Ascending aorta (tissue), 2 donors: ENCODE measurements at regions of chr2 and their contacts with region 1.

Region 1: DNA sequence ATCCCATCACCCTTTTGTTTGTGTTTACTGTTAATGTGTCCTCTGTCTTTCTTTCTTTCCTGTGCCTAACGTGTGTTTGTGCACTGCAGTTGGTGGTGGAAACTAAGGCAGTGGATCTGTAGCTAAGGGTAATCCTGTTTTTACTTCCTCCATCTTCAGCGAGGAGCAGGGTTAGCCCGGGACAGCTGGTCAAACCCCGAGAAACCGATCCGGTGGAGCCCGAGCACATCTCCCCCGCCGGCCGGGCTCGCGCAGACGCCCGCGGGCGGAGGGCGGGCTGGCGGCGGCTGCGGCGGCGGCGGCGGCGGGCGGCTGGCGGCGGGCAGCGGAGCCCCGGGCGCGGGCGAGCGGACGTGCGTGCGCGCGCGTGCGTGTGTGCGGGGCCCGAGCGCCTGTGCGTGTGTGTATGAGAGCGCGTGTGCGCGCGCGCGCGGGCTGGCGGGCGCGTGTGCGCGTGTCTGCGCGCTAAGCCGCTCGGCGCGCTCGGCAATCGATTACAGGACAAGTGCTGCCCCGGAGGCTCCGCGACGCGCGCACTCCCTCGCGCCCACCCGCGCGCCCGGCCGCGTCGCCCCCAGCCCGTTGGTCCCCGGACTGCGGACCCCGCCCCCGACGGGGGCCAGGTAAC is at the start of gene IKZF2:
- DNase-seq: peak; percentile 28 to 91
- H3K4me3 ChIP-seq: peak within 1 kb of the TSS; percentile 79 to 80
- H3K27ac ChIP-seq: peak within 1 kb of the TSS; percentile 90 to 93
- H3K4me1 ChIP-seq: peaks cover 0 to 10% of the 10 kb centered on the region in 2 donors
- H3K27me3 ChIP-seq: no peaks in the 10 kb centered on the region
- CTCF ChIP-seq: no peak
- total RNA-seq, gene IKZF2: 3.9 TPM

Region 2: DNA sequence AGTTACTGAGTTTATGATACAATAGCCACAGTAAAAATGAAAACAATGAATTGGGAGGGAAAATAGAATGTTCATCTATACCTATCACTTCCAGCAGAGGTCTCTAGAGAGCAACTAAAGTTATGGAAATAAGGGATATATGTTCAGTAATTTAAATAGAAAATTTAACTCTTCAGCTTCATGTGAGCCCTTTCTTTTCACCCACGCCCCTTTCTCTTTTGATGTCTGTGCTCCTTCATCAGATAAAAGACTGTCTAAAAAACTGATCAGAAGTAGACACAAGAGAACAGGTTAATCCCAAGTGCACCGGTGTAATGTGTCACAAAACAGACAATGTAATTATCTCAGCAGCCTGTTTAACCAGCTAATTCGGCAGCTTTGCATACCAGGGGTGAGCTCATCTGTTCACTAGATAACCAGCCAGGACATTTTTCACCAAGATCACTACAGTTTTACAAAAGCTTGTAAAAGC is 374.5 kb before region 1 on chr2:
- intact Hi-C with region 1: loop called (anchors 1 kb)
- DNase-seq: no peak
- H3K4me3 ChIP-seq: no peak overlapping the region
- H3K27ac ChIP-seq: no peak overlapping the region
- H3K4me1 ChIP-seq: no peaks in the 10 kb centered on the region
- H3K27me3 ChIP-seq: no peaks in the 10 kb centered on the region
- CTCF ChIP-seq: peak; percentile 26 to 63 (median 47)

Region 3: DNA sequence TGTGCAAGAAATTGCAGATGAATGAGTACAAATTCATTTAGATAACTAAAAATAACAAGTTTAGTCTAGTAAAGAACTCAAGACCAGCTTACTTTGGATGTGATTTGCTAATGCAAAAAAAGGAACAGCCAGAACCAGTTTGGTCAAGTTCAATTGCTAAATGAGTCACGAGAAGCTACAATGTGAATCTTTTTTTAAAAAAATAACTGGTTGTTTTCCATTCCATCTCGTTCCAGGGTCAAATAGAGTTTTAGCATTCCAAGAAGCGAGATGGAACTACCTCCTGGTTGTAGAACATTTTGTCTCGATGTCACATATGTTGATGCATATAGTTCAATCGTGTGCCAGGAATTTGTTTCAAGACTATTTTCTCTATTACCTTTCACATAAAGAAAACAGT is 64.9 kb after region 1 on chr2:
- intact Hi-C with region 1: loop called (anchors 5 kb)
- DNase-seq: no peak
- H3K4me3 ChIP-seq: no peak overlapping the region
- H3K27ac ChIP-seq: peak overlapping the region; percentile 57 to 70
- H3K4me1 ChIP-seq: peaks cover 0 to 20% of the 10 kb centered on the region in 2 donors
- H3K27me3 ChIP-seq: no peaks in the 10 kb centered on the region
- CTCF ChIP-seq: no peak

Region 4: GRCh38 chr2:213284105-213285090 is 132.8 kb after region 1 on chr2 and contains the start of gene SPAG16:
- intact Hi-C with region 1: loop called (anchors 1 kb)
- DNase-seq: peak; percentile 83 to 97
- H3K4me3 ChIP-seq: peak within 1 kb of the TSS; percentile 84 to 85
- H3K27ac ChIP-seq: peak within 1 kb of the TSS; percentile 60 to 69
- H3K4me1 ChIP-seq: peaks cover 0 to 5% of the 10 kb centered on the region in 2 donors
- H3K27me3 ChIP-seq: no peaks in the 10 kb centered on the region
- CTCF ChIP-seq: no peak
- total RNA-seq, gene SPAG16: 7.6 TPM